ENCODE measurements at regions of chr10 and their contacts with region 1.

Region 1: GRCh38 chr10:102904346-102904745 is 13.7 kb upstream of the CNNM2 start:
- DNase-seq: no peak
- H3K4me3 ChIP-seq: no peak overlapping the region
- H3K27me3 ChIP-seq: no peaks in the 10 kb centered on the region; the same call in 1 of the 2 replicates
- CTCF ChIP-seq: no peak

Region 2: GRCh38 chr10:102713814-102714620 is 190.3 kb before region 1 on chr10 and contains the start of gene ARL3:
- CTCF ChIA-PET with region 1: interaction called, 10 read pairs
- POLR2A ChIA-PET with region 1: no interaction called
- DNase-seq: peak; percentile 87
- H3K4me3 ChIP-seq: peak within 1 kb of the TSS; percentile 94
- H3K27me3 ChIP-seq: no peaks in the 10 kb centered on the region
- CTCF ChIP-seq: peak; percentile 67
- polyA plus RNA-seq, gene ARL3: 8.1 and 10.8 TPM in 2 replicates

Region 3: DNA sequence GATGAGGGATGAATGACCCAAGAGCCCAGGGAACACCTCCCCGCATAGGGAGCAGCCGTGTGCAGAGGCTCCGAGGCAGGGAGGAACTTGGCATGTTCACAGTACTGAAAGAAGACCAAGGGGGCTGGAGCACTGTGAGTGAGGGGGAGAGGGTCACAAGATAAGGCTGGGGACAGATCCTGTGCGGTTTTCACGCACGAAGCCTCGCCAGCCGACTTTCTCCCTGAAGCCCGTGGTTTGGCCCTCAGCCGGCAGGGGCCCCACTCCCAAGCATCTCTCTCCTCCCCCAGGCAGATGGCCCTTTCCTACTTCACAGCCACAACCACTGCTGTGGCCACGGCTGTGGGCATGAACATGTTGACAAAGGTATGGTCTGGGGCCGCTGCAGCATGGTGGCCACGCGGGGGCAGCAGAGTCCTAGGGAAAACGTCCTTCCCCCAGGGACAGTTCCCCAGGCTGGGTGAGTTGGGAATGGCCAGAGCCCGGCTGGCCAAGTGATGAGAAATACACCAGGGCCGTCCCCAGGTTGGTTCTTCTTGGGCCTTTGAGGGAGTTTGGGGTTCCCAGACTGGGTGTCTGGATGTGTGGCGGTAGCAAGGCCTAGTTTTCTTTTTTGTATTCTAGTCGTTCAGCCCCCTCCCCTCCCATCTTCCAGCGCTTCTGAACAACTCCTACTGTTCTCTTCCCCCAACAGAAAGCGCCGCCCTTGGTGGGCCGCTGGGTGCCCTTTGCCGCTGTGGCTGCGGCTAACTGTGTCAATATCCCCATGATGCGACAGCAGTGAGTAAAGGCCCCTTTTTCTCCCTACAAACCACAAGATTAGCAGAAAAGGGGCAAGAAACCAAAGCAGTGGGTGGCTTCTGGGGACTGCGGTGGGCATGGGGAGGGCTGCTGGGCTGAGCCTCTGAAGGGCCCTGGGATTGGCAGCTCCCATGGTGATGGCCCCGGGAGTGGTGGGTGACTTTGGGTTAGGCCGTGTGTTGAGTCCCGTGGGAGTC is 175.0 kb before region 1 on chr10:
- CTCF ChIA-PET with region 1: interaction called, 48 read pairs
- POLR2A ChIA-PET with region 1: no interaction called
- DNase-seq: no peak
- H3K4me3 ChIP-seq: no peak overlapping the region
- H3K27me3 ChIP-seq: no peaks in the 10 kb centered on the region
- CTCF ChIP-seq: peak; percentile 91

Region 4: DNA sequence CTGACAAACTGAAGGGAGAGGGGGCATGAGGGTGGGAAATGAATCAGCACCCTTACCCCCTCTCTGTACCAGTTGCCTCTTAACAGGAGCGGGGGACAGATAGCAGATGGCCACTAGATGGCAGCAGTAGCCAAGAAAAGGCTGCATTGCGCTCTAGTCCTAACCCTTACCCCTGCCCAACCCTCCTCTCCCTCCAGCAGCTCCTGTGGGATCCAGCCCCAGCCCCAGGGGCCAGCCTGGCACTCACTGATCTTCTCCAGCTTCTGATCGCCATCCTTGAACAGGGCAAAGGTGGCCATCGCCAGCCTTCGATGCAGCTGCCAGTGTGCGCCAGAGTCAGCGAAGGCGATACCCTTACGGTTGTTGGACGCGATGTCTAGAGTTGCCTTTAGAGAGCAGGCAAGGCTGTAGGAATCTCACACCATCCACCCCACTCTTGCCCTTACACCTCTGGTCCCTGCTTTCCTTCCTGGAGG is 69.3 kb before region 1 on chr10:
- CTCF ChIA-PET with region 1: interaction called, 168 read pairs
- POLR2A ChIA-PET with region 1: no interaction called
- DNase-seq: no peak
- H3K4me3 ChIP-seq: no peak overlapping the region
- H3K27me3 ChIP-seq: peaks cover 4% of the 10 kb centered on the region
- CTCF ChIP-seq: peak; percentile 86

Region 5: GRCh38 chr10:102888048-102888447 is 16.3 kb before region 1 on chr10:
- CTCF ChIA-PET with region 1: interaction called, 23 read pairs
- POLR2A ChIA-PET with region 1: no interaction called
- DNase-seq: no peak
- H3K4me3 ChIP-seq: no peak overlapping the region
- H3K27me3 ChIP-seq: no peaks in the 10 kb centered on the region
- CTCF ChIP-seq: no peak